ENCODE measurements at regions of chr4 and their contacts with region 1.

Region 1: DNA sequence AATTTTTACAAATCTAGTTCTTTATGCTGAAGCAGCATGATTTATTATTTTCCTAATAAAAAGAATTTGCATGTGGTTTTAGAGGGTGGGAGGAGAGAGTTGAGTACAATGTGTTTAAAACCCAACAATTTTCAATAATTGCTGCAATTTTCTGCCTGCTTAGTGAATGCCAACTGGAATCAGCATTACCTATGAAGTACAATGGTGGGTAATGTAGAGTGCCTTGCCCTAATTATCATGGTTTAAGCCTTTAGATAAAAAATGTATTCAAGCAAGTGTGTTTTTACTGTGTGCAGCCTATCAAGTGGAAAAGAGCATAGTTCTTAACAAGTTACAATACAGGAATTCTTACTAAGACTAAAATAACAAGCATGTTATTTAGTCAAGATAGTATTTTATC is 77.9 kb upstream of the ANKRD50 start:
- DNase-seq: no peak
- ATAC-seq: no peak
- H3K4me3 ChIP-seq: no peak overlapping the region
- H3K27ac ChIP-seq: no peak overlapping the region
- H3K4me1 ChIP-seq: no peaks in the 10 kb centered on the region
- H3K27me3 ChIP-seq: no peaks in the 10 kb centered on the region
- CTCF ChIP-seq: no peak
- POLR2A ChIP-seq: no peak

Region 2: GRCh38 chr4:124401606-124402005 is 388.9 kb before region 1 on chr4:
- in situ Hi-C with region 1: no loop called
- intact Hi-C with region 1: no loop called
- DNase-seq: no peak
- ATAC-seq: no peak
- H3K4me3 ChIP-seq: no peak overlapping the region
- H3K27ac ChIP-seq: no peak overlapping the region
- H3K4me1 ChIP-seq: no peaks in the 10 kb centered on the region
- H3K27me3 ChIP-seq: no peaks in the 10 kb centered on the region
- CTCF ChIP-seq: no peak
- POLR2A ChIP-seq: no peak

Region 3: DNA sequence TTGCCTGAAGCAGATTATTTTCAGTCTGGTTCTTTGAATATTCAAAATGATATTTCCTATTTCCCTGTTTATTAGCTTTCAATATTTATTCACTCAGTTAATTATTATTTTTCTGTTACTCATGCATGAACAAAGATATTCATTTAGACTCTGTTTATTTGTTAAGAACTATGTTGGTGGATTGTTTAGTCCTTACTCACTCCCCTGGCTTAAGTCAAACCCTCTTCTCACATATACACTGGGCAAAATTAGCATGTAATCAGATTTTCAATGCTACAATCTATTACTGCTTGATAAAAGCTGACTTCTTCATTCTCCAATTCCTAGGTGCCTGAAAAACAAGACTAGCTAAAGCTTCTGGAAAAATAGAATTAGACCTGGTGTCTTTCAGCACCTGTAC is 860.1 kb after region 1 on chr4:
- in situ Hi-C with region 1: no loop called
- intact Hi-C with region 1: loop called (anchors 10 kb)
- DNase-seq: no peak
- ATAC-seq: no peak
- H3K4me3 ChIP-seq: no peak overlapping the region
- H3K27ac ChIP-seq: no peak overlapping the region
- H3K4me1 ChIP-seq: no peaks in the 10 kb centered on the region
- H3K27me3 ChIP-seq: no peaks in the 10 kb centered on the region
- CTCF ChIP-seq: no peak
- POLR2A ChIP-seq: no peak